MCF 10A (cell line): ENCODE measurements at regions of chr1 and their contacts with region 1.

Region 1: DNA sequence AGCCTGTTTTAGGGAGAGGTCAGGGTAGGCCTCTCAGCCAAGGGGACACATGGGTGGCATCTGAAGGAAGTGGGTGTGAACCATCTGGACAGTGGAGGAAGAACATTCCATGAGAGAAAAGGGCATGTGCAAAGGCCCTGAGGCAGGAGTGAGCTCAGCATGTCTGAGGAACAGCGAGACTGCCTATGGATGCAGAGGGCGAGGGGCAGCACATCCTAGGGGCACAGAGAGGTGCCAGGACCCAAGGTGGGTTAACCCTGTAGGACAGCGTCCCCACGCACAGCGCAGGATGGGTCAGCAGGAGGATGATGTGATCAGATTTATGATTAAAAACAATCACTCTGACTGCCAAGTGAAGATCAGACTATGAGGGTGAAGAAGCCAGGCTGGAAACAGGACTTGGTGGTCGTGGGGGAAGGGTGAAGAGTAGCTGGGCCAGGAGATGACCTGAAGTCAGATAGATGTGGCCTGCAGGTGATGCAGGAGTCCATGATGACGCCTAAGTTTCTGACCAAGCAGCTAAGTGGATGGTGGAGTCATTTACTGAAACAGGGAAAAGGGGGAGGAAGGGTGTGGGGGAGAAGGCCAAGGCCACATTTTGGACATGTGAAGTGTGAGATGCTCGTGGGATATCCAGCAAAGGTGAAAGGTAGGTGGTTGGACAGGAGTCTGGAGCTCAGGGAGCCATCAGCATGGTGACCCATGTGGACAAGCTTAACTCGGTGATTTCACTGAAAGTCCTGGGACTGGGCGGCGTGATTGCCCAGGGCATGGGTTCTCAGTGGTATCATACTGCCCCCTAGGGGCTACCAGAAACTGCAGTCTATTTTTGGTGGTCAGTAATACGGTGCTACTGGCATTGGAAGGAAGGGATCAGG is 37.8 kb downstream of the PABPC4 start:
- DNase-seq: peak; percentile 74
- H3K4me3 Mint-ChIP-seq: no peak overlapping the region
- H3K27ac Mint-ChIP-seq: no peak overlapping the region
- H3K4me1 Mint-ChIP-seq: peaks cover 15% of the 10 kb centered on the region
- H3K27me3 Mint-ChIP-seq: no peaks in the 10 kb centered on the region
- CTCF ChIP-seq: peak; percentile 80

Region 2: GRCh38 chr1:39268112-39268581 is 270.7 kb before region 1 on chr1:
- CTCF ChIA-PET with region 1: interaction called, 6 read pairs
- POLR2A ChIA-PET with region 1: interaction called, 3 read pairs
- intact Hi-C with region 1: loop called (anchors 10 kb)
- DNase-seq: peak; percentile 65
- H3K4me3 Mint-ChIP-seq: peak overlapping the region; percentile 68
- H3K27ac Mint-ChIP-seq: peak overlapping the region; percentile 90
- H3K4me1 Mint-ChIP-seq: peaks cover 46% of the 10 kb centered on the region
- H3K27me3 Mint-ChIP-seq: no peaks in the 10 kb centered on the region
- CTCF ChIP-seq: no peak

Region 3: GRCh38 chr1:39554277-39554676 is 15.4 kb after region 1 on chr1:
- CTCF ChIA-PET with region 1: interaction called, 10 read pairs
- POLR2A ChIA-PET with region 1: interaction called, 5 read pairs
- intact Hi-C with region 1: no loop called
- DNase-seq: no peak
- H3K4me3 Mint-ChIP-seq: no peak overlapping the region
- H3K27ac Mint-ChIP-seq: no peak overlapping the region
- H3K4me1 Mint-ChIP-seq: no peaks in the 10 kb centered on the region
- H3K27me3 Mint-ChIP-seq: no peaks in the 10 kb centered on the region
- CTCF ChIP-seq: no peak

Region 4: GRCh38 chr1:39754906-39755504 is 216.2 kb after region 1 on chr1:
- CTCF ChIA-PET with region 1: no interaction called
- POLR2A ChIA-PET with region 1: no interaction called
- intact Hi-C with region 1: no loop called
- DNase-seq: no peak
- H3K4me3 Mint-ChIP-seq: no peak overlapping the region
- H3K27ac Mint-ChIP-seq: no peak overlapping the region
- H3K4me1 Mint-ChIP-seq: no peaks in the 10 kb centered on the region
- H3K27me3 Mint-ChIP-seq: no peaks in the 10 kb centered on the region
- CTCF ChIP-seq: no peak